ENCODE measurements at regions of chrX and their contacts with region 1.

Region 1: DNA sequence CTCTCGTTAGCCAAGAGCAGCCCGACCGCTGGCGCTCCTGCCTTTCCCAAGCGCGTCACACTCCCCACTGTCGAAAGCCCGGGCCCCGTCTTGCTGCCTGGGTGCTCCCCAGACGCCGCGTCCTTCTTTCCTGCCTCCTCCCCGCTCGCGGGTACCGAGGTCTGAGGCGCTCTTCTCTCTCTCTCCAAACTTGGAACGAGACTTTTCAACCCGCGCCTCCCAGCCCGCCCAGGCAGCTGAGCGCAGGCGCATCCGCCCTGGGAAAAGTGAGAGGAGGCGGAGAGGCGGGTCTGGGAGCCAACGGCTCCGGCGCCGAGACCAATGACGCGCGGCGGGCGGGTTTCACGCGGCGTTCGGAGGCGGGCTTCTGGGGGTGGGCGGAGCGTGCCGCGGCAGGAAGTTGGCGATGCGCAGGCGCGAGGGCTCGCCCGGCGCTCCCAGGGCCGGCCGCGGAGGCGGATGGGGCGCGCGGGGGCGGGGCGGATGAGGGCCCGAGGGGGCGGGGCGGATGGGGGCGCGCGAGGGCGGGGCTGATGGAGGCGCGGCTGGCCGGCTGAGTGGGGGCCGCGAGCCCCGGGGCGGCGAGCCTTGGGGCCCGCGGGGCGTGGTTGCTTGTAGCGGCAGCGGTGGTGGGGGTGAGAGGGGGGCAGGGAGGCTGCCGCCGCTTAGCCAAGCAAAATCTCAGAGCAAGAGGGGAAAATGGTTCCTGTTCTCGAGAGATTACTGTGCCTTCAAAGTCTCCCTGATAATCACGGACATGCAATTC is at the start of gene RBBP7:
- DNase-seq: peak; percentile 91 to 96 (median 95)
- ATAC-seq: peak; percentile 96 to 98 (median 98)
- H3K4me3 ChIP-seq: peak within 1 kb of the TSS; percentile 46 to 86 (median 66)
- H3K27ac ChIP-seq: peak within 1 kb of the TSS; percentile 87 to 97 (median 92)
- H3K4me1 ChIP-seq: peaks cover 0 to 29% (median 12%) of the 10 kb centered on the region in 12 donors
- H3K27me3 ChIP-seq: peaks cover 0 to 64% (median 0%) of the 10 kb centered on the region in 9 donors
- CTCF ChIP-seq: no peak
- POLR2A ChIP-seq: peak in 1 of 2 donors; percentile 88
- total RNA-seq, gene RBBP7: 88.7 to 124 (median 107) TPM

Region 2: GRCh38 chrX:16765594-16765993 is 104.7 kb before region 1 on chrX:
- intact Hi-C with region 1: no loop called
- DNase-seq: no peak
- ATAC-seq: no peak
- H3K4me3 ChIP-seq: no peak overlapping the region
- H3K27ac ChIP-seq: no peak overlapping the region
- H3K4me1 ChIP-seq: no peaks in the 10 kb centered on the region
- H3K27me3 ChIP-seq: peaks cover 0 to 3% (median 0%) of the 10 kb centered on the region in 9 donors
- CTCF ChIP-seq: no peak
- POLR2A ChIP-seq: no peak

Region 3: GRCh38 chrX:16786139-16786790 is 84.0 kb before region 1 on chrX and contains the start of gene TXLNG:
- intact Hi-C with region 1: loop called in 1 of 10 experiments (anchors 5 kb)
- DNase-seq: peak; percentile 95 to 100 (median 96)
- ATAC-seq: peak; percentile 99 to 100 (median 100)
- H3K4me3 ChIP-seq: peak within 1 kb of the TSS; percentile 63 to 93 (median 78)
- H3K27ac ChIP-seq: peak within 1 kb of the TSS; percentile 47 to 93 (median 84)
- H3K4me1 ChIP-seq: peaks cover 0 to 16% (median 6%) of the 10 kb centered on the region in 12 donors
- H3K27me3 ChIP-seq: no peaks in the 10 kb centered on the region
- CTCF ChIP-seq: no peak
- POLR2A ChIP-seq: peak in 1 of 2 donors; percentile 85
- total RNA-seq, gene TXLNG: 4.3 to 8.1 (median 6.3) TPM

Region 4: DNA sequence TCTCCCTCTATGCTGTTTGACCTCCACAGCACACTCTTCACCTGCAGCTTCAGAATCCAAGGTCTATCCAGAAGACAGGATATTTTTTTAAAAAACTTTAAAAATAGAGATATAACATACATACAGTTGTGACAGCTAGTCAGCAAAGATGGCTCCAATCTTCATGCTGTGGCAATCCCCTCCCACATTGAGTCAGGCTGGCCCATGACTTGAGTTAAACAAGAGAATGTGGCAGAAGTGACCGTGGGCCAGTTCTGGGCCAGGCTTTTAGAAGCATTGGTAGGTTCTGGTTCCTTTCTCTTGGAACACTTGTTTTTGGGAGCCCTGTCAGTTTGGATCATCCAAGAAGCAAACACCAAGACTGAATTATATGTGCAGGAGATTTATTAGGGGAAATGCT is 40.1 kb after region 1 on chrX:
- intact Hi-C with region 1: no loop called
- DNase-seq: no peak
- ATAC-seq: no peak
- H3K4me3 ChIP-seq: no peak overlapping the region
- H3K27ac ChIP-seq: no peak overlapping the region
- H3K4me1 ChIP-seq: no peaks in the 10 kb centered on the region
- H3K27me3 ChIP-seq: peaks cover 0 to 36% (median 0%) of the 10 kb centered on the region in 9 donors
- CTCF ChIP-seq: no peak
- POLR2A ChIP-seq: no peak

Measured in heart left ventricle (tissue), 16 donors.